Breast epithelium (tissue), 4 donors: ENCODE measurements at regions of chr15 and their contacts with region 1.

Region 1: GRCh38 chr15:52857937-52858781 is 68.0 kb upstream of the ONECUT1 start:
- DNase-seq: no peak
- H3K4me3 ChIP-seq: no peak overlapping the region
- H3K27ac ChIP-seq: no peak overlapping the region
- H3K4me1 ChIP-seq: no peaks in the 10 kb centered on the region
- H3K27me3 ChIP-seq: peaks cover 0 to 29% of the 10 kb centered on the region in 2 donors
- CTCF ChIP-seq: no peak
- POLR2A ChIP-seq: no peak

Region 2: GRCh38 chr15:52822475-52822874 is 35.7 kb before region 1 on chr15:
- intact Hi-C with region 1: no loop called
- DNase-seq: no peak
- H3K4me3 ChIP-seq: no peak overlapping the region
- H3K27ac ChIP-seq: no peak overlapping the region
- H3K4me1 ChIP-seq: no peaks in the 10 kb centered on the region
- H3K27me3 ChIP-seq: peaks cover 0 to 18% of the 10 kb centered on the region in 2 donors
- CTCF ChIP-seq: no peak
- POLR2A ChIP-seq: no peak

Region 3: DNA sequence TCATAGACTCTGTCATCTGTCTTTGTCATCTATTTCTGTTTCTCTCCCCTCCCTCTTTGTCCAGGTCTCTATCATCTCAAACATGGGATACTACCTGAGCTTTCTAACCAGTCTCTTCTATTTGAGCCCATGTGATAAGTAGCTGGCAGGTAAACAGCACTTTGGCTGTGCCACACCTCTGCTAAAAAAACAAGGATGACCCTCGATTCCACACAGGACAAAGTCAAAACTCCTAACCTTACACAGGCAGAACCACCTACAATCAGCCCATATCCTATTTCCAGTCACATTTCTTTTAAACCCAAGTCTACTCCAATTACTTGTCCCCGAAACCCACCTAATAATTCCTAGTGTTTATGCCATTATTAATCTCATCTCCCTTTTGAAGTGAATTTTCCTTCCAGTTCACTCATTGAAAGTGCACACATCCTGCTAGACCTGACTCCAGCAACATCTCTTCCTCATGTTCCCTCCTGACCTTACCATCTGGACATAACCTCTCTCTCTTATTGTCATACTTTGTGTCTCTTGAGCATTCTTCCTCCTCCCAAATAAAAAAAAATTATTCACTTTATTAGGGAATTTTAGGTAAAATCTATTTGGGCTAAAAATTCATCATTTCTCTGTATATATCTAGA is 188.1 kb after region 1 on chr15:
- intact Hi-C with region 1: no loop called
- DNase-seq: no peak
- H3K4me3 ChIP-seq: no peak overlapping the region
- H3K27ac ChIP-seq: no peak overlapping the region
- H3K4me1 ChIP-seq: no peaks in the 10 kb centered on the region
- H3K27me3 ChIP-seq: no peaks in the 10 kb centered on the region
- CTCF ChIP-seq: no peak
- POLR2A ChIP-seq: no peak

Region 4: DNA sequence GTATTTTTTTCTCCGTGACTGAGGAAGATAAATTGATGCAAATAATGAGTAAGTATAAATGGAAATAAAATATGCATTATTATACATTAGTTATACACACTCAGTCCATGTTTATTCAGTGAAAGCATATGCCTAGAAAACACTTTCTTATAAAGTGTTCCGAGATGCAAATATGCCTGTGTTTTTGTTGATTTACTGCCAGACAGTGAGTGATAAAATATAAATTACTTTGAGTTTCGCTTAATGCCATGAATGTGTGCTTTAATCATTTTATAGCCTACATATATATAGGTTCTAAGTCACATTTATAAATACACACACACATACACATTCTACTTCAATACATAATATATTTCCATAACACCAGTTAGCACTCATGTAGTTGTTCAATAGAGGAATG is 1689.3 kb after region 1 on chr15:
- intact Hi-C with region 1: loop called (anchors 5 kb)
- DNase-seq: no peak
- H3K4me3 ChIP-seq: no peak overlapping the region
- H3K27ac ChIP-seq: no peak overlapping the region
- H3K4me1 ChIP-seq: no peaks in the 10 kb centered on the region
- H3K27me3 ChIP-seq: no peaks in the 10 kb centered on the region
- CTCF ChIP-seq: no peak
- POLR2A ChIP-seq: no peak